ENCODE measurements at regions of chr17 and their contacts with region 1.

Region 1: GRCh38 chr17:65231662-65232335 is 94.6 kb downstream of the RGS9 start:
- DNase-seq: peak; percentile 41 to 46
- ATAC-seq: peak; percentile 94

Region 2: DNA sequence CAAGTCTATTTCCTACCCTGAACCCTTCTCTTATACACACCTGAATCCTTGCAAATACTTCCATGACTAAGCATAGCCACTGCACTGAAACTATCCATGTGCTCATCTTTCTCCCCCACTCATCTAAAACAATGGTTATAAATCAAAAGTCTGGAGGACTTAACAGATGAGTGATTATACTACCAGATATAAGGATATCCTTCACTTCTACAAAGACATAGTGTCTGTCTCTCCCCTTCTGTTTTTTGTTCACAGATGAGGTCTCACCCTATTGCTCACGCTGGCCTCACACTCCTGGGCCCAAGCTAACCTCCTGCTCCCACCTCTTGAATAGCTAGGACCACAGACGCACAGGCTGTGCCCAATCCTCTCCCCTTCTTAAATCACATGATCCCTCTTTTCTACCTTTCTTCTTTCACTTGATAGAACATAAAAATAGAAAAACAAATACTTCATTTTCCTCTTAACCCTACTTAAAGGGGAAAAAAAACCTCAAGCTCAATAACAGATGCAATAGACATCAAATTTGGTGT is 941.0 kb after region 1 on chr17:
- intact Hi-C with region 1: loop called in 1 of 2 experiments (anchors 5 kb)
- DNase-seq: no peak
- ATAC-seq: no peak

Measured in left colon (tissue), 2 donors.